Mucosa of descending colon (tissue), 3 donors: ENCODE measurements at regions of chr18 and their contacts with region 1.

Region 1: GRCh38 chr18:27599202-27599829 is 414.2 kb upstream of the CHST9 start:
- DNase-seq: peak in 2 of 3 donors; percentile 35 to 61
- ATAC-seq: peak; percentile 66
- H3K4me3 ChIP-seq: no peak overlapping the region
- H3K4me1 ChIP-seq: no peaks in the 10 kb centered on the region
- CTCF ChIP-seq: peak; percentile 46

Region 2: DNA sequence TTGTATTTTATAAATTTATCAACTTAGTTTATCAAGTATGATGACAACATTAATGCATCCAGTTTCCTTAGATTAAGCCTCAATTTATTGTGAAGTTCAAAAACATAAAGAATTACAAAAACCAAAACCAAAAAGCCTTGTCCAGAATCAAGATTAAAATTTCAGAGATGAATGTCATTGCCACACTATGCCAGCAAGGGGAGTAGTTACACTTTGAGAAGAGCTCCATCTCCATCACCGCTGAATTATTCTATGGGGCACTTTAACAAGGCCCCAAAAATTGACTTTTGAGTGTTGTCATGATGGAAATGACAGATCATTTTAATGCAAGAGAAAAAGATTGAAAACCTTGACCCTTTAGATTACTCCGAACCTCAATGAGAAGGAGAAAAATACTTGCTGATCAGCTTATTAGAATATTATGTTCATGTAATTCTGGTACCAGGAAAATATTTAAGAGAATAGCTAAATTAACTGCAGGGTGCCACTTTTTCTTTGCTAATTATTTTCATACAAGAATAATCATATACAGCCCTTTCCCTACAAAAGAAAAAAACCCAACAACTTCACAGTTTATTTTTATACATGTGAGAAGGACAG is 581.3 kb before region 1 on chr18:
- intact Hi-C with region 1: loop called in 1 of 2 experiments (anchors 5 kb)
- DNase-seq: no peak
- ATAC-seq: no peak
- H3K4me3 ChIP-seq: no peak overlapping the region
- H3K4me1 ChIP-seq: no peaks in the 10 kb centered on the region
- CTCF ChIP-seq: no peak